ENCODE measurements at regions of chr18 and their contacts with region 1.

Region 1: DNA sequence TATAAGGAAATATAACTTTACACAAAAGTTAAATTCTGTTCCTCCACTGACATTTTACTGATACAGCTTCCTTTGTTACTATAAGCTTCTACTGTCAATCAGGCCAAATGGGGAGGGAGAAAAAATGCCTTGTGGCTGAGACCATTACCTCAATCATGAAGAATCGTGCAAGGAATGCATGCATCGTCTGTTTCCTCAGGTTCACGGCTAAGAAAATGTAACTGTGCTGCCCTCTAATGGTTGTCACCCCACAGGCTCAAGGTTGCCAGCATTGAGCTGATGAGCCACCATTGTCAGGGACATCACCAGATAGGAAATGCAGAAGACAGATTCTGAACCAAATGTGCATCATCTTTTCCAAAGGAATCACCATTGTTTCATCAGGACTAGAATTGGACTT is 426.9 kb downstream of the CDH2 start:
- DNase-seq: peak in 3 of 6 donors; percentile 7 to 31 (median 14)
- ATAC-seq: peak in 3 of 4 donors; percentile 67 to 86 (median 70)
- H3K4me3 ChIP-seq: no peak overlapping the region
- H3K27ac ChIP-seq: no peak overlapping the region
- H3K4me1 ChIP-seq: no peaks in the 10 kb centered on the region
- H3K27me3 ChIP-seq: peaks cover 0 to 10% (median 0%) of the 10 kb centered on the region in 4 donors
- CTCF ChIP-seq: peak in 1 of 4 donors; percentile 38

Region 2: GRCh38 chr18:27605107-27605834 is 144.7 kb before region 1 on chr18:
- intact Hi-C with region 1: loop called in 1 of 3 experiments (anchors 10 kb)
- DNase-seq: peak in 4 of 6 donors; percentile 29 to 67 (median 48)
- ATAC-seq: peak; percentile 85 to 99 (median 97)
- H3K4me3 ChIP-seq: no peak overlapping the region
- H3K27ac ChIP-seq: no peak overlapping the region
- H3K4me1 ChIP-seq: peaks cover 0 to 5% (median 0%) of the 10 kb centered on the region in 3 donors
- H3K27me3 ChIP-seq: no peaks in the 10 kb centered on the region
- CTCF ChIP-seq: peak; percentile 67 to 76 (median 72)

Region 3: GRCh38 chr18:27695503-27695902 is 54.5 kb before region 1 on chr18:
- intact Hi-C with region 1: loop called in 1 of 3 experiments (anchors 5 kb)
- DNase-seq: no peak
- ATAC-seq: peak in 1 of 4 donors; percentile 64
- H3K4me3 ChIP-seq: no peak overlapping the region
- H3K27ac ChIP-seq: no peak overlapping the region
- H3K4me1 ChIP-seq: no peaks in the 10 kb centered on the region
- H3K27me3 ChIP-seq: no peaks in the 10 kb centered on the region
- CTCF ChIP-seq: no peak

Region 4: GRCh38 chr18:27843783-27844777 is 94.1 kb after region 1 on chr18:
- intact Hi-C with region 1: no loop called
- DNase-seq: no peak
- ATAC-seq: no peak
- H3K4me3 ChIP-seq: no peak overlapping the region
- H3K27ac ChIP-seq: no peak overlapping the region
- H3K4me1 ChIP-seq: no peaks in the 10 kb centered on the region
- H3K27me3 ChIP-seq: no peaks in the 10 kb centered on the region
- CTCF ChIP-seq: no peak

Region 5: GRCh38 chr18:27942701-27943100 is 192.7 kb after region 1 on chr18:
- intact Hi-C with region 1: no loop called
- DNase-seq: no peak
- ATAC-seq: no peak
- H3K4me3 ChIP-seq: no peak overlapping the region
- H3K27ac ChIP-seq: no peak overlapping the region
- H3K4me1 ChIP-seq: no peaks in the 10 kb centered on the region
- H3K27me3 ChIP-seq: peaks cover 0 to 4% (median 0%) of the 10 kb centered on the region in 4 donors
- CTCF ChIP-seq: no peak

Measured in pancreas (tissue), 10 donors.